ENCODE measurements at regions of chr11 and their contacts with region 1.

Region 1: GRCh38 chr11:132028380-132029240 is 658.2 kb downstream of the NTM start:
- DNase-seq: no peak
- H3K4me3 Mint-ChIP-seq: no peak overlapping the region
- H3K27ac Mint-ChIP-seq: no peak overlapping the region
- H3K4me1 Mint-ChIP-seq: no peaks in the 10 kb centered on the region
- H3K27me3 Mint-ChIP-seq: no peaks in the 10 kb centered on the region

Region 2: GRCh38 chr11:131748151-131749050 is 280.2 kb before region 1 on chr11:
- intact Hi-C with region 1: loop called (anchors 5 kb)
- DNase-seq: no peak
- H3K4me3 Mint-ChIP-seq: no peak overlapping the region
- H3K27ac Mint-ChIP-seq: no peak overlapping the region
- H3K4me1 Mint-ChIP-seq: no peaks in the 10 kb centered on the region
- H3K27me3 Mint-ChIP-seq: no peaks in the 10 kb centered on the region